GM12878 (cell line): ENCODE measurements at regions of chr3 and their contacts with region 1.

Region 1: DNA sequence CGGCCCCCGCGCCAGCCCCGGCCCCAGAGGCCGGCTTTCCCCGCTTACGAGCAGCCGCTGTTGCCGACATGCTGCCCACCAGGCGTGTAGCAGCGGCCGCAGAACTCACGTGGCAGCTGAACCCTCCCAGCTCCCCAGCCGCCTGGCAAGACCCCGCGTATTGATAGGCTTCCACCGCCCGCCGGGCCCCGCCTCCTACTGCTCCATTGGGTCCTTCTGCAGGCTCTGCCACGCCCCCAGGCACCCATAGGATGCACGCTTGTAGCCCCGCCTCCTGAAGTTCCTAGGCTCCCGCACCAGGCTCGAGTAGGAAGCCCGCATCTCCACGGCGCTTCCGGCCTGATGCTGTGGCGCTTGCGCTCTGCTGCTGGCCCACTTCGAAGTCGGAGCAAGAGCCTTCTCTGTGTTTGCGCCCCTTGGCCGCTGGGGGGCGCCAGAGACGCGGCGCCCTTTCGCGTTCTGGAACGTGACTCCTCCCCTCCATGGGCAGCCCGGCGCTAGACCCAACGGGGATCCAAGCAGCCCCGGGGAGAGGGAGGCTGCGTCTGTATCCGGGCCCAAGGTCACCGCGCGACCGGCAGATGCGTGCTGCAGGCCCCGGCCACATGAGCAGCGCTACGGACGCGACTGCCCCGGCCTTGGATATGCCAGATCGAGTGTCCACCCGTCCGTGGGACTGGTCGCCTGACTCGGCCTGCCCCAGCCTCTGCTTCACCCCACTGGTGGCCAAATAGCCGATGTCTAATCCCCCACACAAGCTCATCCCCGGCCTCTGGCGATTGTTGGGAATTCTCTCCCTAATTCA is at the starts of genes PARP3 and RRP9:
- DNase-seq: peak; percentile 99
- ATAC-seq: peak; percentile 92
- H3K4me3 ChIP-seq: peak within 1 kb of the TSS; percentile 96
- H3K27ac ChIP-seq: peak within 1 kb of the TSS; percentile 98
- H3K4me1 ChIP-seq: peaks cover 11% of the 10 kb centered on the region
- H3K27me3 ChIP-seq: no peaks in the 10 kb centered on the region
- CTCF ChIP-seq: peak; percentile 99 to 100 (median 99); a peak in 5 of 6 replicates
- EP300 ChIP-seq: peak in 1 of 2 experiments; percentile 38; a peak in 1 of 4 replicates
- POLR2A ChIP-seq: peak; percentile 91
- RAD21 ChIP-seq: peak; percentile 83
- polyA plus RNA-seq, gene PARP3: 2.1 to 2.2 TPM
- polyA plus RNA-seq, gene RRP9: 4.7 to 10.6 TPM

Region 2: DNA sequence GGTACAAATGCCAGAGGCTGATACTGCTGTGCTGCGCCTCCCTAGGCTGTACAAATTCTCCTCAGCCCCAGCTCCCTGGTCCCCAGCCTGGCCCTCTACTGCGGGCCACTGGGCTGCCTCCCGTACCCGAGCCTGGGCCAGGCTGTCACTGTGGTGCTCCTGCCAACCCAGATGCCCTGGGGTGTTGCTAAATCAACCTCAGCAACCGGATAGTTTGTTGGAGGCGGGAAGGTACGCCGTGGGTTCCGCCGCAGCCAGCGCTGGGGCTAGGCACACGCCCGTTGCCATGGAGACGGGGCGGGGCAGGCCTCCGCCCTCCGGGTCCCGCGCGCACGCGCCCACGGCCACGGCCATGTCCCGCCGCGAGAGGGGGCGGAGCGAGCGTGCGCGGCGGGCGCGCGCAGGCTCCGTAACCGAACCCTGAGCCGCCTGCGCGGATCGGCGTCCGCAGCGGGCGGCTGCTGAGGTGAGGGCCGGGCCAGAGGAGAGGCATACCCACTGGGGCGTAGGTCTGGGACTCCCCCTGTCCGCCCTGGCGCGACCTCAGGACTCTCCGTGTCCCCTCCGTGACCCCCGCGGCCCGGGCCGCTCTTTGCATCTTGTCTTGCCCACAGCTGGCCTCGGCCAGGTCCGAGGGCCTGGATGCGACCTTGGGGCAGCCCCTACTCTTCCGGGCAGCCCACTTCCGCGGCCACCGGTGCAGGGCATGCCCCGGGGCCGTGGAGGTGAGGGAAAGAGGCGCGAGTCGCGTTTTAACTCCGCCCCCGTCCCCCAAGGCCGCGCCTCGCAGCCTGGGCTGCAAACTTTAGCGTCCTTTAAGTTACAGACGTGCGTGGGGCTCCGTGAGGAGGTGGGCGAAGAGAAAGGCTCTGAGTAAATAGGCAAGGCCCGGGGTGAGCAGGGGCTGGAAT is 270.9 kb before region 1 on chr3 and contains the start of gene TEX264:
- CTCF ChIA-PET with region 1: no interaction called
- POLR2A ChIA-PET with region 1: no interaction called
- RAD21 ChIA-PET with region 1: no interaction called
- SMC1A ChIA-PET with region 1: no interaction called
- in situ Hi-C with region 1: no loop called
- intact Hi-C with region 1: no loop called
- DNase-seq: peak; percentile 53
- ATAC-seq: peak; percentile 87
- H3K4me3 ChIP-seq: peak within 1 kb of the TSS; percentile 68
- H3K27ac ChIP-seq: peak within 1 kb of the TSS; percentile 93
- H3K4me1 ChIP-seq: peaks cover 22% of the 10 kb centered on the region
- H3K27me3 ChIP-seq: no peaks in the 10 kb centered on the region
- CTCF ChIP-seq: no peak
- EP300 ChIP-seq: no peak
- POLR2A ChIP-seq: peak; percentile 88
- RAD21 ChIP-seq: no peak
- polyA plus RNA-seq, gene TEX264: 3.6 to 15.3 TPM

Region 3: GRCh38 chr3:51879937-51880336 is 62.1 kb before region 1 on chr3:
- CTCF ChIA-PET with region 1: no interaction called
- POLR2A ChIA-PET with region 1: no interaction called
- RAD21 ChIA-PET with region 1: no interaction called
- SMC1A ChIA-PET with region 1: no interaction called
- in situ Hi-C with region 1: no loop called
- intact Hi-C with region 1: no loop called
- DNase-seq: no peak
- ATAC-seq: no peak
- H3K4me3 ChIP-seq: no peak overlapping the region
- H3K27ac ChIP-seq: no peak overlapping the region
- H3K4me1 ChIP-seq: no peaks in the 10 kb centered on the region
- H3K27me3 ChIP-seq: peaks cover 1 to 5% of the 10 kb centered on the region in 2 experiments; a peak in 2 of 4 replicates
- CTCF ChIP-seq: no peak
- EP300 ChIP-seq: no peak
- POLR2A ChIP-seq: no peak
- RAD21 ChIP-seq: no peak

Region 4: GRCh38 chr3:51967384-51968169 is 25.6 kb after region 1 on chr3 and contains the start of gene PCBP4:
- CTCF ChIA-PET with region 1: interaction called, 79 read pairs
- POLR2A ChIA-PET with region 1: interaction called, 3 read pairs
- RAD21 ChIA-PET with region 1: interaction called, 34 read pairs
- SMC1A ChIA-PET with region 1: interaction called, 33 read pairs
- in situ Hi-C with region 1: no loop called
- intact Hi-C with region 1: no loop called
- DNase-seq: no peak
- ATAC-seq: peak; percentile 68
- H3K4me3 ChIP-seq: peak within 1 kb of the TSS; percentile 82
- H3K27ac ChIP-seq: no peak within 1 kb of the TSS
- H3K4me1 ChIP-seq: peaks cover 6% of the 10 kb centered on the region; the same call in 1 of the 2 replicates
- H3K27me3 ChIP-seq: no peaks in the 10 kb centered on the region; a peak in 1 of 4 replicates
- CTCF ChIP-seq: no peak
- EP300 ChIP-seq: no peak
- POLR2A ChIP-seq: peak; percentile 52
- RAD21 ChIP-seq: no peak
- polyA plus RNA-seq, gene PCBP4: 0.05 to 0.24 TPM

Region 5: GRCh38 chr3:51974963-51975851 is 33.2 kb after region 1 on chr3 and contains the start of gene ABHD14A:
- CTCF ChIA-PET with region 1: interaction called, 79 read pairs
- POLR2A ChIA-PET with region 1: interaction called, 24 read pairs
- RAD21 ChIA-PET with region 1: interaction called, 34 read pairs
- SMC1A ChIA-PET with region 1: interaction called, 33 read pairs
- in situ Hi-C with region 1: no loop called
- intact Hi-C with region 1: loop called (anchors 1 kb)
- DNase-seq: no peak
- ATAC-seq: peak; percentile 91
- H3K4me3 ChIP-seq: peak within 1 kb of the TSS; percentile 84
- H3K27ac ChIP-seq: peak within 1 kb of the TSS; percentile 91
- H3K4me1 ChIP-seq: peaks cover 15% of the 10 kb centered on the region
- H3K27me3 ChIP-seq: no peaks in the 10 kb centered on the region
- CTCF ChIP-seq: no peak
- EP300 ChIP-seq: no peak
- POLR2A ChIP-seq: peak; percentile 88
- RAD21 ChIP-seq: no peak
- polyA plus RNA-seq, gene ABHD14A: 1.2 to 2.2 TPM

Region 6: GRCh38 chr3:51982782-51983577 is 41.0 kb after region 1 on chr3 and contains the start of gene ACY1:
- CTCF ChIA-PET with region 1: interaction called, 34 read pairs
- POLR2A ChIA-PET with region 1: interaction called, 10 read pairs
- RAD21 ChIA-PET with region 1: interaction called, 30 read pairs
- SMC1A ChIA-PET with region 1: interaction called, 8 read pairs
- in situ Hi-C with region 1: no loop called
- intact Hi-C with region 1: no loop called
- DNase-seq: peak; percentile 43
- ATAC-seq: peak; percentile 92
- H3K4me3 ChIP-seq: peak within 1 kb of the TSS; percentile 97
- H3K27ac ChIP-seq: peak within 1 kb of the TSS; percentile 73
- H3K4me1 ChIP-seq: peaks cover 8% of the 10 kb centered on the region
- H3K27me3 ChIP-seq: no peaks in the 10 kb centered on the region
- CTCF ChIP-seq: no peak
- EP300 ChIP-seq: no peak
- POLR2A ChIP-seq: peak; percentile 81; the same call in 1 of the 2 replicates
- RAD21 ChIP-seq: no peak
- polyA plus RNA-seq, gene ACY1: 19.8 to 28.2 TPM

Region 7: DNA sequence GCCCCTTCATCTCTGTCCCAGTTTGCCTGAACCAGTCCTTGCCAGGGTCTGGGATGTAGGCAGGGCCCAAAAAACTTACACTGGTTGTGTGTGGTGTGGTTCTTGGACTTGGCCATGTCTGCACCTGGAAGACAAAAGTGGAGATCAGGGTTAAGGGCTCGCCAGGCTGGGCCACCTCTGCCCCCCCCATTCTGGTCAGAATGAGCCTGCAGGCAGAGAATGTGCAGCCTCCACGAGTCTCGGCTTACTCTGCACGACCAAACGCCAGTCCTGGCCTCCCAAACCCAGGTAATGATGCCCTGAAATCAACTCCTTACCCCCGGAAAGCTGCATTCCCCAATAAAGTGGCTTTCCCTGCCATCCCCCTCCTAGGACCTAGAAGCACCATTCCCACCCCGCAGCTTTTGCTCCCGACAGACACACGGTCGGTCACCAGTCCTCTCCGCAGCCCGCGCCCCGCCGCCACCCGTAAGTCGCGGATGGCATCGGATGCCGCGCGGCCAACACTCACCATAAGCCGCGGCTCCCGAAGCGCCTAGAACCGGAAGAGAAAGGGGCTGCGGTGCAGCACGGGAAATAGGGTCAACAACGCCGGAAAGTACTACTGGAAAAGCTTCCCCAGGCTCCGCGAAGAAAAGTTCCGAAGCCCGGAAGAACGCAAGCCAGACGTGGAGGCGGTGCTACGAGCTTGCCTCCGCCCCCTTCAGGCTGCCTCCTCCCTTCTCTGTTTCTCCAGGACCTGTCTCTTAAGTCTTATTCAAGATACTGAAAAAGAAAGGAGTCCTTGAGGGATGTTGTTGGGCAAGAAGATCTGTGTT is 53.6 kb after region 1 on chr3 and contains the start of gene RPL29:
- CTCF ChIA-PET with region 1: interaction called, 15 read pairs
- POLR2A ChIA-PET with region 1: interaction called, 14 read pairs
- RAD21 ChIA-PET with region 1: interaction called, 7 read pairs
- SMC1A ChIA-PET with region 1: interaction called, 13 read pairs
- in situ Hi-C with region 1: no loop called
- intact Hi-C with region 1: loop called (anchors 2 kb)
- DNase-seq: peak; percentile 88
- ATAC-seq: peak; percentile 92
- H3K4me3 ChIP-seq: peak within 1 kb of the TSS; percentile 99
- H3K27ac ChIP-seq: peak within 1 kb of the TSS; percentile 66
- H3K4me1 ChIP-seq: peaks cover 9% of the 10 kb centered on the region
- H3K27me3 ChIP-seq: no peaks in the 10 kb centered on the region; a peak in 1 of 4 replicates
- CTCF ChIP-seq: no peak
- EP300 ChIP-seq: no peak
- POLR2A ChIP-seq: peak; percentile 100
- RAD21 ChIP-seq: no peak
- polyA plus RNA-seq, gene RPL29: 1,053 to 1,085 TPM

Region 8: DNA sequence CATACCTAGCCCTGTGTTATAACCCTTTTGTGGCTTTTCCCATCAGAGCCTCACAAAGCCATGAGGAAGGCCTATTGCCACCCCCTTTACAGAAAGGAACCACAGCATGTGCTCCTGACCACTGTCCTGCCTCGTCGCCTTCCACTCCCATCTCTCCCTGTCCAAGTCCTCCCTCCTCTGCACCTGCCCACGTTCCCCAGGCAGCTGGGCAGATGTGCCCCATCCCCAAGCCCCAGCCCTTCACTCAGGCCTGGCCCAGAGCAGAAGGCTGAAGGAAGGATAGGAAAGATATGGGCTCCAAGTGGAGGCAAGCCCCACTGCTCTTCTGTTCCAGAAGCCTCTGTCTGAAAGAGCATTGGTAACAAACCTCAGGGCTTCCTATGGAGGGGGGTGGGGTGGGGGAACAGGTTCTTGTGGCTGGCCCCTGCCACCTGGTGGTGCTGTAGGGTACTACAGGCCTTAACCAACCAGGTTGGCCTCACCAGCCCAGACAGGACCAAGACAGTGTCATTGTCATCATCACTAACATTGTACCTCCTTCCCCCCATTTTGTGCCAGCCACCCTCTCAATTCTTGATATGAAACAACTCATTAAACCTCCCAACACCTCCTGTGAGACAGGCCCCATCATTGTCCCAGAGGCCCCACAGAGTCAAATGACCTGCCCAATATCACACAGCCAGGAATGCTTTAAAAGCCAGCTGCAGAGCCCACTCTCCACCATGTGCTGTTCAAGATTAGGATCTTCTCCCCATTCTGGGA is 202.2 kb after region 1 on chr3:
- CTCF ChIA-PET with region 1: interaction called, 4 read pairs
- POLR2A ChIA-PET with region 1: no interaction called
- RAD21 ChIA-PET with region 1: no interaction called
- SMC1A ChIA-PET with region 1: no interaction called
- in situ Hi-C with region 1: no loop called
- intact Hi-C with region 1: loop called (anchors 1 kb)
- DNase-seq: no peak
- ATAC-seq: peak; percentile 100
- H3K4me3 ChIP-seq: no peak overlapping the region
- H3K27ac ChIP-seq: no peak overlapping the region
- H3K4me1 ChIP-seq: peaks cover 5% of the 10 kb centered on the region; the same call in 1 of the 2 replicates
- H3K27me3 ChIP-seq: no peaks in the 10 kb centered on the region
- CTCF ChIP-seq: peak; percentile 92 to 97 (median 94); a peak in 5 of 6 replicates
- EP300 ChIP-seq: no peak
- POLR2A ChIP-seq: no peak
- RAD21 ChIP-seq: peak; percentile 93

Region 9: DNA sequence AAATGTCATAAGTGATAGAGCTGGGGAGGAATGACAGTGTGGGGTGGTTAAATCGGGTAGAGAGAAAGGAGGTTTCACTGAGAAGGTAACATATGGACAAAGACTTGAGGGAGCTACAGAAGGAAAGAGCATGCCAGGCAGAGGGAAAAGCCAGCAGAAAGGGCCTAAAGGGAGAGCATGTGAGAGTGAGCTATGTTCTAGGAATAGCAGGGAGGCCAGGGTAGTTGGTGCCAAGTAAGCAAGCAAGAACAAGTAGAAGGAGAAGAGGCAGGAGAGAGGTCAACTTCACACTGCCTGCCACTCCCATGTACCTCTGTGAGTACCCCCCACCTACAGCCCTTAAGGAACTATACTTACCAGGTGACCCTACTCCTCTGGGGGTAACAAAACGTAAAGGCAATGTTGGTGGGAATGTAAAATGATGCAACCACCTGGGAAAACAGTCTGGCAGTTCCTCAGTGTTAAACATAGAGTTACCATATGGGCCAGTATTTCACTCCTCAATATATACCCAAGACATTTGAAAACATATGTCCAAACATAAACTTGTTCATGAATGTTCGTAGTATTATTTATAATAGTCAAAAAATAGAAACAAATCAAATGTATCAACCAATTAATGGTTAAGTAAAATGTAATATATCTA is 1036.2 kb after region 1 on chr3:
- CTCF ChIA-PET with region 1: no interaction called
- POLR2A ChIA-PET with region 1: no interaction called
- RAD21 ChIA-PET with region 1: no interaction called
- SMC1A ChIA-PET with region 1: no interaction called
- in situ Hi-C with region 1: no loop called
- intact Hi-C with region 1: no loop called
- DNase-seq: no peak
- ATAC-seq: no peak
- H3K4me3 ChIP-seq: no peak overlapping the region
- H3K27ac ChIP-seq: no peak overlapping the region
- H3K4me1 ChIP-seq: peaks cover 5% of the 10 kb centered on the region
- H3K27me3 ChIP-seq: no peaks in the 10 kb centered on the region
- CTCF ChIP-seq: no peak
- EP300 ChIP-seq: no peak
- POLR2A ChIP-seq: no peak
- RAD21 ChIP-seq: no peak